ENCODE measurements at regions of chr5 and their contacts with region 1.

Region 1: GRCh38 chr5:126544087-126544740 is 50.8 kb downstream of the ALDH7A1 start:
- DNase-seq: peak in 1 of 2 donors; percentile 64
- ATAC-seq: peak; percentile 64

Region 2: GRCh38 chr5:126354012-126354857 is 190.0 kb before region 1 on chr5:
- intact Hi-C with region 1: loop called in 1 of 2 experiments (anchors 5 kb)
- DNase-seq: no peak
- ATAC-seq: peak; percentile 74

Measured in left colon (tissue), 2 donors.